Heart left ventricle (tissue), 16 donors: ENCODE measurements at regions of chr5 and their contacts with region 1.

Region 1: GRCh38 chr5:75734913-75735789 is 17.9 kb upstream of the POC5 start:
- DNase-seq: peak in 2 of 5 donors; percentile 22 to 38
- ATAC-seq: peak in 2 of 4 donors; percentile 65 to 77
- H3K4me3 ChIP-seq: no peak overlapping the region
- H3K27ac ChIP-seq: no peak overlapping the region
- H3K4me1 ChIP-seq: no peaks in the 10 kb centered on the region
- H3K27me3 ChIP-seq: peaks cover 0 to 2% (median 0%) of the 10 kb centered on the region in 9 donors
- CTCF ChIP-seq: peak; percentile 10 to 62 (median 50)
- POLR2A ChIP-seq: no peak

Region 2: DNA sequence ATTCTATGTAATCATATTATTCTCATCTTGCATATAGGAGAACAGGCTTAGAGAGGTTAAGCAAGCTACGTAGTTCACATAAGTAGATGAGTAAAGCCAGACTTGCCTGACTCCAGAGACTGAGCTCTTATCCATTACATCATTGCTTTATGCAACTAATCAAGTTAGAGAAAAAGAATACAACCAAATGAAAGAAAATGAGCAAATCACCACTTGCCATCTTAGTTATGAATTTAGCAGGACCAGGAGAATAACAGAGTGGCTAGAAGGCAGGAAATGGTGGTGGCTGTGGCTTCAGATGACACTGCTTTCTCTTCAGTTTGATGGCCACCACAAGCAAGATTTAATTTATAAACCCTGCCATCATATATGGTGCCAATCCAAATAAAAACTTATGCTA is 44.5 kb before region 1 on chr5:
- intact Hi-C with region 1: no loop called
- DNase-seq: no peak
- ATAC-seq: no peak
- H3K4me3 ChIP-seq: no peak overlapping the region
- H3K27ac ChIP-seq: no peak overlapping the region
- H3K4me1 ChIP-seq: no peaks in the 10 kb centered on the region
- H3K27me3 ChIP-seq: no peaks in the 10 kb centered on the region
- CTCF ChIP-seq: no peak
- POLR2A ChIP-seq: no peak

Region 3: DNA sequence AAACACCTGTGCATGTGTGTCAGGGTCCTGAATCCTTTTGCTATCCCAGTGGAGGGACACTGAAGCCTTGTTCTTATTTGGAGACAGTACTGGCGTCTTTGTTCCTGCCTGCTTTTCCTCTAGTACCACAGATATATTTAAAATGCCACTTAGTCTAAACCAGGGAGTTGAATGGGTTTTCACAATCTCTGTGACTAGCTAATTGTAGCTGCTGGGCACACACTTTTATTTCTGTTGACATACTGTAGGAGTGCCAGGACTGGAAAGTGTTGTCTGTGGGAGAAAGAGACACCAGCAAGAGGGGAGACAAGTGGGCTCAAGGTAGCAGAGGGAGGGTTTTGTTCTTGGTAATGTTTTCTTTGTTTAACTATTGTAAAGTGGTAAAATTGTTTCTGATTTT is 174.1 kb after region 1 on chr5:
- intact Hi-C with region 1: no loop called
- DNase-seq: no peak
- ATAC-seq: peak in 1 of 4 donors; percentile 24
- H3K4me3 ChIP-seq: no peak overlapping the region
- H3K27ac ChIP-seq: no peak overlapping the region
- H3K4me1 ChIP-seq: no peaks in the 10 kb centered on the region
- H3K27me3 ChIP-seq: no peaks in the 10 kb centered on the region
- CTCF ChIP-seq: no peak
- POLR2A ChIP-seq: no peak

Region 4: GRCh38 chr5:76165711-76166374 is 430.7 kb after region 1 on chr5:
- intact Hi-C with region 1: loop called in 3 of 10 experiments (anchors 10 kb)
- DNase-seq: no peak
- ATAC-seq: no peak
- H3K4me3 ChIP-seq: no peak overlapping the region
- H3K27ac ChIP-seq: no peak overlapping the region
- H3K4me1 ChIP-seq: no peaks in the 10 kb centered on the region
- H3K27me3 ChIP-seq: peaks cover 0 to 3% (median 0%) of the 10 kb centered on the region in 9 donors
- CTCF ChIP-seq: no peak
- POLR2A ChIP-seq: no peak

Region 5: GRCh38 chr5:76175051-76175666 is 440.0 kb after region 1 on chr5:
- intact Hi-C with region 1: loop called in 4 of 10 experiments (anchors 2 to 10 kb)
- DNase-seq: peak in 2 of 5 donors; percentile 13 to 25
- ATAC-seq: peak in 1 of 4 donors; percentile 49
- H3K4me3 ChIP-seq: no peak overlapping the region
- H3K27ac ChIP-seq: peak overlapping the region in 1 of 12 donors; percentile 9
- H3K4me1 ChIP-seq: peaks cover 0 to 9% (median 0%) of the 10 kb centered on the region in 12 donors
- H3K27me3 ChIP-seq: peaks cover 0 to 9% (median 0%) of the 10 kb centered on the region in 9 donors
- CTCF ChIP-seq: peak; percentile 33 to 69 (median 60)
- POLR2A ChIP-seq: no peak

Region 6: DNA sequence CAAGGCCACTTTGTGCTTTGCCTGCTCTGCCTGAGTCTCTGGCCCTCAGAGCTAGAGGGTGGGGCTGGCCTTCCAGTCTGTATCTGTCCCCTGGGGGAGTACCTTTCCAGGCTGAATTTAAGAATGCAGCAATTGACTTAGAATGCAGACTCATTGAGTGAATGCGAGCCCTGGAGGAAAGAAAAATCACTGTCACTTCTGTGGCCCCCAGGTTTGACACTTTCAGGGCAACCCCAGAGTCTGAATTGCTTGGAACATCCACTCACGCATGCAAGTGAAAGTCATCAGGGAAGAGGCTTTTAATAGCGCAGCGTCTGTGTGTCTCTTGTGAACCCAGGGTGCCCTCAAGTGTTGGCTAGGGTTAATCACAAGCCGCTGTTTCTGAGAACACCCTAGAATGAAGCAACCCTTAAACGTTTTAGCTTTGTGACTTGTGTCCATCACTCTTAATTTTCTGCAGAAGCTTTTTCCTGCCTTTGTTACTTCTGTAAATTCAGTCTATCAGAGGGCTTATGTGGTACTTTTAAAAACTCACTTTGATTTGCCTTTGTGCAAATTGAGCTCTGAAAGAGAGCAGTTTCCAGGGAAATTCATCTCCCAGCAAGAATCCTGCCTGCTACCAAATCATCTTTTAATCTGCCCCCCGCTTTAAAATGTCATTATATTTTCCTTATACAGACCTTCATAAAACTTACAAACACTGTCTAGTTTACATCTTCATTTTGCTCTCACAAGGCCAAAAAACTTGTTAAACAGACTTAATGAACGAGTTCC is 521.2 kb after region 1 on chr5:
- intact Hi-C with region 1: loop called in 9 of 10 experiments (anchors 5 to 10 kb)
- DNase-seq: peak in 4 of 5 donors; percentile 48 to 57 (median 51)
- ATAC-seq: peak; percentile 78 to 95 (median 94)
- H3K4me3 ChIP-seq: no peak overlapping the region
- H3K27ac ChIP-seq: no peak overlapping the region
- H3K4me1 ChIP-seq: peaks cover 0 to 7% (median 3%) of the 10 kb centered on the region in 12 donors
- H3K27me3 ChIP-seq: peaks cover 0 to 19% (median 3%) of the 10 kb centered on the region in 9 donors
- CTCF ChIP-seq: peak; percentile 44 to 70 (median 60)
- POLR2A ChIP-seq: no peak